Natural killer cell (primary cell): ENCODE measurements at regions of chr4 and their contacts with region 1.

Region 1: DNA sequence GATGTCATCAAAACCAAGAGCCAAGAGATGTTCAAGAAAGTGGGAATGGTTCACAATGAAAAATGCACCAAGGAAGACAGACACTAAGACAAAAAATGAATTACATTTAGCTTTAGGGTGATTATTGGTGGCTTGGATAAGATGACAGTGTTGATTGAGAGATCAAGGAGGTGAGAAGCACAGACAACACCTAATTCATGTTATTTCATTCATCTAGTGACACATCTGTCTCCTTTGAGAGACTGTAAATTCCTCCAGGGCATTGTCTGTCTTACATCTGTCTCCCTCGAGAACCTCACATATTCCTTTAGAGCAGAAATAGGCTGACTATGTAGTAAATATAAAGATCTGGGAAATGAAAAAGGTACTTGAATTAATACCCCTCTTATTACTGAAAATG is 94.2 kb upstream of the SMIM31 start:
- DNase-seq: no peak
- ATAC-seq: no peak
- H3K4me3 ChIP-seq: no peak overlapping the region
- H3K4me3 Mint-ChIP-seq: no peak overlapping the region
- H3K27ac ChIP-seq: no peak overlapping the region
- H3K27ac Mint-ChIP-seq: no peak overlapping the region
- H3K4me1 ChIP-seq: no peaks in the 10 kb centered on the region
- H3K4me1 Mint-ChIP-seq: no peaks in the 10 kb centered on the region
- H3K27me3 ChIP-seq: no peaks in the 10 kb centered on the region
- H3K27me3 Mint-ChIP-seq: no peaks in the 10 kb centered on the region
- CTCF ChIP-seq: no peak

Region 2: GRCh38 chr4:164509951-164510350 is 149.8 kb before region 1 on chr4:
- intact Hi-C with region 1: loop called (anchors 5 kb)
- DNase-seq: no peak
- ATAC-seq: no peak
- H3K4me3 ChIP-seq: no peak overlapping the region
- H3K4me3 Mint-ChIP-seq: no peak overlapping the region
- H3K27ac ChIP-seq: no peak overlapping the region
- H3K27ac Mint-ChIP-seq: no peak overlapping the region
- H3K4me1 ChIP-seq: no peaks in the 10 kb centered on the region
- H3K4me1 Mint-ChIP-seq: no peaks in the 10 kb centered on the region
- H3K27me3 ChIP-seq: no peaks in the 10 kb centered on the region
- H3K27me3 Mint-ChIP-seq: no peaks in the 10 kb centered on the region
- CTCF ChIP-seq: no peak

Region 3: GRCh38 chr4:164639001-164639400 is 20.8 kb before region 1 on chr4:
- intact Hi-C with region 1: no loop called
- DNase-seq: no peak
- ATAC-seq: no peak
- H3K4me3 ChIP-seq: no peak overlapping the region
- H3K4me3 Mint-ChIP-seq: no peak overlapping the region
- H3K27ac ChIP-seq: no peak overlapping the region
- H3K27ac Mint-ChIP-seq: no peak overlapping the region
- H3K4me1 ChIP-seq: no peaks in the 10 kb centered on the region
- H3K4me1 Mint-ChIP-seq: no peaks in the 10 kb centered on the region
- H3K27me3 ChIP-seq: no peaks in the 10 kb centered on the region
- H3K27me3 Mint-ChIP-seq: no peaks in the 10 kb centered on the region
- CTCF ChIP-seq: no peak

Region 4: GRCh38 chr4:164683040-164683439 is 23.3 kb after region 1 on chr4:
- intact Hi-C with region 1: no loop called
- DNase-seq: no peak
- ATAC-seq: no peak
- H3K4me3 ChIP-seq: no peak overlapping the region
- H3K4me3 Mint-ChIP-seq: no peak overlapping the region
- H3K27ac ChIP-seq: no peak overlapping the region
- H3K27ac Mint-ChIP-seq: no peak overlapping the region
- H3K4me1 ChIP-seq: no peaks in the 10 kb centered on the region
- H3K4me1 Mint-ChIP-seq: no peaks in the 10 kb centered on the region
- H3K27me3 ChIP-seq: no peaks in the 10 kb centered on the region
- H3K27me3 Mint-ChIP-seq: no peaks in the 10 kb centered on the region
- CTCF ChIP-seq: no peak

Region 5: DNA sequence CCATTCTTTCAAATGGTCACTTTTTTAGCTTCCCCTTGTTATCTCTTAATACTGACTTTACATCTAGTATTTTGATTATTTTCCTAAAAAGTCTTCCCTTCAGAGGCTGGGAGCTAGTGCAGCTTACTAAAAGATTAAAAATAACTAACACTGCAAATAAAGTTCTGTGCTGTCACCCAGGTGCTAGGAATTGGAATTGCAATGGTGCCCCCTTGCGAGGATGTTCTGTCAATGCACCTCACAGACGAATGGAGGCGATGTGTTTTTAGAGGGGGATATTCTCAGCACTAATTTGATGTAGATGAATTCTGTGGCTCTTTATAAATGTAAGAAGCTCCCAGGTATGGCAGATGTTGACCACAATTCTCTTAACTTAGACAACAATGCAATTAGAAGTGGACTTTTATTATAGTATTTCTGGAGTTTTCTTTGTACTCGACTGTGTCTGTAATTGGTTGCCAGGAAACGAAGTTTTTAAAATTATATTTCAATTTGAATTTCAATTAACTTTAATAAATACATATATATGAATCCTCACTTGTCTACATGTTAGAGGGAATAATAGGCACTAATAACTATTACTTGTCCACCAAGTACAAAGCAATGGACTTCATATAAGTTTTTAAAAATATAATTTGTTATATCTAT is 72.2 kb after region 1 on chr4:
- intact Hi-C with region 1: no loop called
- DNase-seq: peak; percentile 43 to 68
- ATAC-seq: peak; percentile 65 to 75 (median 73)
- H3K4me3 ChIP-seq: no peak overlapping the region
- H3K4me3 Mint-ChIP-seq: no peak overlapping the region
- H3K27ac ChIP-seq: no peak overlapping the region
- H3K27ac Mint-ChIP-seq: no peak overlapping the region
- H3K4me1 ChIP-seq: no peaks in the 10 kb centered on the region
- H3K4me1 Mint-ChIP-seq: peaks cover 8 to 40% of the 10 kb centered on the region in 2 donors
- H3K27me3 ChIP-seq: no peaks in the 10 kb centered on the region
- H3K27me3 Mint-ChIP-seq: peaks cover 0 to 5% of the 10 kb centered on the region in 2 donors
- CTCF ChIP-seq: peak; percentile 95